Posterior cingulate gyrus (tissue), 11 donors: ENCODE measurements at regions of chr12 and their contacts with region 1.

Region 1: DNA sequence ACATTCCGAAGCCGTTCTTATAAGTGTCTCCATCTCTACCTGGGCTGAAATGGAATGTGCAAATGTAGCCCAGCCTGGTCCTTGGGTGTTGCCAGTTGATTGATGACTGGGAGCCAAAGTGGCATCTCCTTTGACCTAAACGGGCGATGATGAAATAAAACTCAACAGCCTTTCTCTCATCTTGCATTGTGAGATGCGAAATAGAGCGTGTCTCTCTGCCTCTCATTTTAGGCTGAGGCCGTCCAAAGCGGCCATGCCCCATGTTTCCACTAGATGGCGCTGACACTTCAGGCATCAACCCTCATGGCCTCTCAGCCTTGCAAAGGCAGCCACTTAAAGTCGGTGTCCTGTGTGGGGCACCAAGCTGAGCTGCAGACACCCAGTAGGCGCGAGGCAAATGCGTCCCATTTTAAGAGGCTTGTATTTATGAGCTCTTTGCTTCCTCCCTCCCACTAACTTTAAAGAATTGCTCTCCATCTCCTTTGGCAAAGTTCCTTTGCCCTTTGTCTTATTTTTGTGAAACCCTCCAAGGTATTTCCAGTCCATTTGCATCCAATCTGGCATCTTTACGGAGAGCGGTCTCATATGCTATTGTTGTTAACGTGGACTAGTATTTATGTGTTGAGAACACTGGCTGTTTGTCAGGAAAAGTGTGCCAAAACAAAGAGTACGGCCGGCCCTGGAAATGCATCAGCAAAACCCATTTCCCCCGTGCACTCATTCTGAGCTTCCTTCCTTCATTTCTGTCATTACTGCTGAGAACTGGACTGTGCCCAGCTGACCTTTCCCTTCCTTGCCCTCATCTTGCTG is 25.0 kb downstream of the GPRC5A start:
- DNase-seq: peak; percentile 87 to 99 (median 94)

Region 2: DNA sequence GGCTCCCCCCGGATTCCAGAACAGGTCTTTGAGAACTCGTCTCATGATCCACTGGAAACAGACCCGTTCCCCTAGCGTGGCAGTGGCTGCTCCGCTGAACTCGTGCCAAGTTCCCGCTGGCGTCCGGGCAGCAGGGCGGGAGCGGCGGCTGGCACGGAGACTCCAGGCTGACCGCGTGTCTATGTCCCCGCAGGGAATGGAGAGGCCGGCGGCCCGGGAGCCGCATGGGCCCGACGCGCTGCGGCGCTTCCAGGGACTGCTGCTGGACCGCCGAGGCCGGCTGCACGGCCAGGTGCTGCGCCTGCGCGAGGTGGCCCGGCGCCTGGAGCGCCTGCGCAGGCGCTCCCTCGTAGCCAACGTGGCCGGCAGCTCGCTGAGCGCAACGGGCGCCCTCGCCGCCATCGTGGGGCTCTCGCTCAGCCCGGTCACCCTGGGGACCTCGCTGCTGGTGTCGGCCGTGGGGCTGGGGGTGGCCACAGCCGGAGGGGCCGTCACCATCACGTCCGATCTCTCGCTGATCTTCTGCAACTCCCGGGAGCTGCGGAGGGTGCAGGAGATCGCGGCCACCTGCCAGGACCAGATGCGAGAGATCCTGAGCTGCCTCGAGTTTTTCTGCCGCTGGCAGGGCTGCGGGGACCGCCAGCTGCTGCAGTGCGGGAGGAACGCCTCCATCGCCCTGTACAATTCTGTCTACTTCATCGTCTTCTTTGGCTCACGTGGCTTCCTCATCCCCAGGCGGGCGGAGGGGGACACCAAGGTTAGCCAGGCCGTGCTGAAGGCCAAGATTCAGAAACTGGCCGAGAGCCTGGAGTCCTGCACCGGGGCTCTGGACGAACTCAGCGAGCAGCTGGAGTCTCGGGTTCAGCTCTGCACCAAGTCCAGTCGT is 129.4 kb before region 1 on chr12:
- intact Hi-C with region 1: loop called (anchors 10 kb)
- DNase-seq: peak; percentile 63 to 96 (median 73)

Region 3: DNA sequence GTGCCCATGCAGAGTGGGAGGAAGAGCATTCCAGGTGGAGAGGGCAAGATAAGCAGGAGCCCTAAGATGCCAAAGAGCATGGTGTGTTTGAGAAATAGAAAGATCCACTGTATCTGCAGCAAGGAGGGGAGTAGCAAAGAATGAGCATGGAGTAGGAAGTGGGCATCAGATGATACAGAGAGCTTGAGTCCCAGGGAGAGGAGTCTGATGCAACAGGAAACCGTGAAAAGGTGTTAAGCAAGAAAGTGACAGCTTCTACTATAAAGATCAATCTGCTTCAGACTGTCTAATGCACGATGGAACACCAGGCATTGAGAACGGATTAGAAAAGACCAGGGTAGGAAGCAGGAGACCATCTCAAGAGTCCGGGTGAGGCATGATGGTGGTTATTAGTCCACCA is 47.9 kb after region 1 on chr12:
- intact Hi-C with region 1: no loop called
- DNase-seq: no peak

Region 4: GRCh38 chr12:12983420-12984035 is 67.2 kb after region 1 on chr12:
- intact Hi-C with region 1: loop called (anchors 2 kb)
- DNase-seq: peak in 2 of 10 donors; percentile 31 to 44

Region 5: DNA sequence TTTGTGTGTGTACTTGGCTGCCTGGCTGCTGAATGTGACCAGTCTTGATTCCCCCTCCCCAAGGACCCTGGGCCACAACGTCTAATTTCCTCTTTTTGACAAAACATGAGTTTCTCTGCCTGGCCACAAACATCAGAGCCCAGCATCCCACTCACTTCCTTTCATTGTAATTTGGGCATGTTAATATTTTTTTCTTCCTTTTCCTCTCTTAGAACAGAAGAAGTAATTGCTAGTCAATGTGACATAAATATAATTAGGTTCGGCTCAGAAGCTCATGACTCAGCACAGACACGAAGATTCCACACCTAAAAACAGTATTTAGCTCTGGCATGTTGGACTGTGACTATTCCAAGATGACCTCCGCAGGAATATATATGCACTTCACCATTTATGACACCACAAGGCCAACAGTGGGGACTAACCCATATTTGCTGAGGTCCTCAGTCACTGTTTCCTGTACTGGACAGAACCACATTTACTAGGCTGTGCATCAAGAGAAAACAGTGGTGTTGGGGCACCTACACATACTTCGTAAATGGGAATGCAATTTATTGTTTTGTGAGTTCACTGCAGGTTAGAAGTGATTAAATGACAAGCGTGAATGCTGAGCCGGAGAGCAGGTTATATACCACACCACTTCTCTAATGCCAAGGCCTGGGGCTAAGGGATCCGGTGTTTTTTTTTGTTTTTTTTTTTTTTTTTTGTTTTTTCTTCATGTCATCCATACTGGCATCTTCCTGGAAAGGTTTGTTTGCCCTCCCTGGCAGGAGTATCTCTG is 182.9 kb after region 1 on chr12:
- intact Hi-C with region 1: loop called (anchors 5 kb)
- DNase-seq: no peak

Region 6: DNA sequence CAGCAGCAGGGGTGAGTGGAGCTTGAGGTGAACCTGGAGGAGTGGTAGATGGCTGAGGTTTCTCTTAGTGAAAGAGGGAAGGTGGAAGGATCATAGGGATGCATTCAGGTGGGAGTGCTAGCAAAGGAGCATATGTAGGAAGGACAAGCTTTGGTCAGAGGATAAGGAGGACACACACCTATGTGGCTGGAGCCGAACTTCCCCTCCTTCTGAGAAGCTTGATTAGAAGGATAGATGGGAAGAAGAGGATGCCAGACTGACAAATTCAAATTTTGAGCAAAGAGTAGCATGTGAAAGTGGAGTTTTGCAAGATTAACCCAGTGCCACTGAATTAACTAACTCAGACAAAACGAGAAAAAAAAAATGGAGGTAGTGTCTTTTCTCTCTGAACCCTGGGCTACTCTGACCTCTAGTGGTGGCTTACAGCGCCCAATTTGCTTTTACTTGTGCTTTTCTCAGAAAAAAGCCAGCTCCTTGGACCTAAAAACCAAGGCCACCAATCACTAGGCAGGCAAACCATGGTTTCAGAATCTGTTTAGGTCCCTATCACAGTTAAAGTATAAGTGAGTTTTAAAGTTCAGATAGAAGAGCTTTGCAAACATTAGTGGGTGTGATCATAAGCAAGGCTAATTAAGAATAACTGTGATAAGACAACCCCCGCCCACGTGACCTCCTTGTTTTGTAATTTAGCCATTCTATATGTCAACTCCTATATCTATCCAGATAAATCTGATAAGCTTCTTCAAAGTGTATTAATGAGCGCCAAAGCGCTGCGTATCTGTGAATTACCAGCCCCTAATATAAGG is 295.7 kb after region 1 on chr12:
- intact Hi-C with region 1: loop called (anchors 1 kb)
- DNase-seq: peak in 7 of 10 donors; percentile 17 to 90 (median 65)